Left cardiac atrium (tissue), 4 donors: ENCODE measurements at regions of chr18 and their contacts with region 1.

Region 1: GRCh38 chr18:12038639-12039417 is 54.8 kb upstream of the ANKRD62 start:
- DNase-seq: peak; percentile 83
- ATAC-seq: peak; percentile 95 to 98

Region 2: GRCh38 chr18:11733031-11733430 is 305.8 kb before region 1 on chr18:
- intact Hi-C with region 1: loop called (anchors 2 to 10 kb)
- DNase-seq: peak; percentile 79
- ATAC-seq: peak; percentile 89 to 93

Region 3: DNA sequence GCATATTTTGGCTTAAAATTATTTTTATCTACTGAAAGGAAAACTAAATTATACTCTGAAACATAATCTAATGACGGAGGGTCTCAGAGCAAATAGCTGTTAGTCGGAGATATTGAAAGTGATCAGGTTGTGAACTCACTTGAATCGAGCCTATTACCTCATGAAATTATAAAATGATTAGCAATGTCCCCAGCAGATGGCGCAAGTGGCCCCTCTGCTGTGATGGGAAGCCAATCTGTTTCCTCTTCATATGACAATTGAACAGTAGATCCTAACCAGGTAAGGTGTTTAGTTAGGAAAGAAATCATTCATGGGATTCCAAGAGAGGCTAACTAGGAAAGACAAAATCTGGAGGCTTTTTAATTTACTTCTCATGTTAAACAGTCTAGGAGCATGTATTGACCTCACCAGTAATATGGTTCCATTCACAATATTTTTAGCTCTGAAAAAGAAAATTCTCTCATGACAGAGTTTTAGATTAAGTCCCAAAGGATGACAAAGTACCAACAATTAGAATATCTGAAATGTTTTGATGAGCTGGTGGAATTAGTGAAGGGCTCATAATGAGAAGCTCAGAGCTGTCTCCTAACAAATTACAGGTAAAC is 100.9 kb before region 1 on chr18:
- intact Hi-C with region 1: loop called (anchors 2 to 5 kb)
- DNase-seq: peak; percentile 76
- ATAC-seq: peak; percentile 77 to 81

Region 4: GRCh38 chr18:11947214-11948191 is 91.3 kb before region 1 on chr18:
- intact Hi-C with region 1: loop called in 1 of 2 experiments (anchors 5 kb)
- DNase-seq: peak; percentile 95
- ATAC-seq: peak; percentile 96 to 99

Region 5: DNA sequence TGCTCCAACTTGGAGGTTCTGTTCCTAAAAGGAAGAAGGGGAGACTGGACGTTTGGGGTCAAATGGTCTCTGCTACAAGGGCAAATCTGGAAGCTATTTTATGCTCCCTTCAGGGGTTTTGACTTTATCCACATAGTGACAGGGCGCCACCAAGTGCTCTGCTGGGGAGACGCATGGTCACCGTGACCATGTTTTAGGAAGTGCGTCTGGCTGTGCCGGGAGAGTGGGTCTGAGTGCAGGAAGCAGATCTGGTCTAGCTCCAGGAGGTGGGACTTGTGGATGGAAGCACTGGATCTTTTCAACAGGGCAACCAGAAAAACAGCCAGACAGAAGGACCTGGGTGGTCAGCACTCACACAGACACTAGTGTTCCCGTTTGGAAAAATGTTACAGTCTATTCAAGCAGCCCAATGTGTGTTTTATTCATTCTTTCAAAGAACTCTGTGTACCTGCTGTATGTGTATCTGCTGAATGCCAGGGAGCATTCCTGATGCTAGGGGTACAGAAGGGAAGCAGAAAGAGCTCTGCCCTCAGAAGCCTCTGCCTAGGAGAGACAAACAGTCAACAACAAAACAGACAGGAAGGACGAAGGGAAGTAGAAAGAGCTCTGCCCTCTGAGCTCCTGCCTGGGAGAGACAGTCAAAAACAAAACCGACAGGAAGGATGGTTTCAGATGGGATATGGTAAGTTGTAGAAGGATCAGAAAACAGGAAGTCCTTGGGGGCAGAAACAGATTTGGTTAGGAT is 43.2 kb before region 1 on chr18:
- intact Hi-C with region 1: loop called in 1 of 2 experiments (anchors 5 kb)
- DNase-seq: peak; percentile 82
- ATAC-seq: peak; percentile 90 to 91